ENCODE measurements at regions of chrX and their contacts with region 1.

Region 1: DNA sequence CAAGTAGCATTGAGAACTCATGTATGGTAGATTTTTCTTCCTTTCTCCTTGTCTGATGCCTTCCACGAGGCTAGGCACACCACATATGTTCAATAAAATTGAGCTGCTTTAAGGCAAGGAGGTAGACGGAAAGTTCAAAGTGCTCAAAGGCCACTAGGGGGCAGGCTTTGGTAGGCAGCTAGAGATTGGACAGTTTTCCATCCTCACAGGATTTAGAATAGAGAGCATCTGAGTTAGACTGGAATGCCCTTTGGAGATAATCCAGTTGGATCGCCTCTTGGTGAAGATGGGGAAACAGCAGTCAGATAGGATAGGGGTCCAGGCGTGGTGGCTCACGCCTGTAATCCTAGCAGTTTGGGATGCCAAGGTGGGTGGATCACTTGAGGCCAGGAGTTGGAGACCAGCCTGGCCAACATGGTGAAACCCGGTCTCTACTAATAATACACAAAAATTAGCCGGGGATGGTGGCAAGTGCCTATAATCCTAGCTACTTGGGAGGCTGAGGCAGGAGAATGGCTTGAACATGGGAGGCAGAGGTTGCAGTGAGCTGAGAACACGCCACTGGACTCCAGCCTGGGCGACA is 30.4 kb downstream of the ELF4 start:
- DNase-seq: peak; percentile 63
- H3K4me3 Mint-ChIP-seq: no peak overlapping the region
- H3K27ac Mint-ChIP-seq: peak overlapping the region; percentile 72
- H3K4me1 Mint-ChIP-seq: peaks cover 49% of the 10 kb centered on the region
- H3K27me3 Mint-ChIP-seq: no peaks in the 10 kb centered on the region

Region 2: GRCh38 chrX:129982274-129983251 is 97.4 kb before region 1 on chrX and contains the start of gene BCORL1:
- CTCF ChIA-PET with region 1: no interaction called
- POLR2A ChIA-PET with region 1: no interaction called
- DNase-seq: peak; percentile 87
- H3K4me3 Mint-ChIP-seq: no peak within 1 kb of the TSS
- H3K27ac Mint-ChIP-seq: peak within 1 kb of the TSS; percentile 78
- H3K4me1 Mint-ChIP-seq: peaks cover 22% of the 10 kb centered on the region
- H3K27me3 Mint-ChIP-seq: peaks cover 14% of the 10 kb centered on the region
- total RNA-seq, gene BCORL1: 4.0 to 4.5 TPM

Region 3: GRCh38 chrX:130120746-130121504 is 41.0 kb after region 1 on chrX:
- CTCF ChIA-PET with region 1: interaction called, 15 read pairs
- POLR2A ChIA-PET with region 1: no interaction called
- DNase-seq: peak; percentile 62
- H3K4me3 Mint-ChIP-seq: peak overlapping the region; percentile 54
- H3K27ac Mint-ChIP-seq: peak overlapping the region; percentile 80
- H3K4me1 Mint-ChIP-seq: peaks cover 22% of the 10 kb centered on the region
- H3K27me3 Mint-ChIP-seq: no peaks in the 10 kb centered on the region